Tibial artery (tissue), 4 donors: ENCODE measurements at regions of chr17 and their contacts with region 1.

Region 1: DNA sequence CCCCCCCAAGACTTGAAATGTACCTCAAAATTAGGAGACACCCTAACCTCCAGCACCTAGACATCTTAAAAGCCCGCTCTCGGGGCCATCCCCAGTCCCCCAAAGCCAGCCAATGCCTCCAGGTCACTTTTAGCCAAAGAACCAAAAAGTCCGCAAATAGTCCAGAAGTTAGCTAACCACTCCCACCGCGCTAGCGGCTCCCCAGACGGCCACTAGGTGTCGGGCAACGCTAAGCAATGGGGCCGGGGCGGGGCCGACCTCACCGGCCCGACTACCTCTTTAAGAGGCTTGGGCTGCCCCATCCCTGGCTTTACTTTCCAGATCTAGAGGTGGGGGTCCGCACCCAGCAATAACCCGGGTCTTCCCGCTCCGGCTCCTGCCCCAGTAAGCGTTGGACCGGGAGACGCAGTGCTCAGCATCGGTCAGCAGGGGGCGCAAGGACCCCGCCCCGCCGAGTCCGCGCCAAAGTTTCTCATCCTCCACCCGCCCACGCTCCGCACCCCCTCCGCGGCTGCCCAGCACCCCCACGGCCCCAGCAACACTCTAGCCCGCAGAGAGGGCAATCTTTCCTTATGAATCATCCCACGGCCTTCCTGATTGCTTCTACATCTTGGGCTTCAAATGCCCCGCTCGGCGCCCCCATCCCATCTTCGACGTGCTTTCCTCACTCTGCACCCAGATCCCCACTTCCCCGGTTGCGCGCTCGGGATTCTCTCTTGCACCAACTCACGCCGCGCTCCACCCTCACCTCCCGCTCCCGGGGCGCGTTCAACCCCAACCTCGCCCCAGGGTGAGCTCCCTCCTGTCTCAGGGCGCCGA is 765 bp downstream of the COL1A1 start:
- DNase-seq: peak; percentile 93 to 96
- H3K4me3 ChIP-seq: peak overlapping the region; percentile 67 to 89
- H3K27ac ChIP-seq: peak overlapping the region; percentile 98 to 99
- H3K4me1 ChIP-seq: peaks cover 0 to 81% (median 58%) of the 10 kb centered on the region in 4 donors
- H3K27me3 ChIP-seq: no peaks in the 10 kb centered on the region
- CTCF ChIP-seq: peak; percentile 100

Region 2: DNA sequence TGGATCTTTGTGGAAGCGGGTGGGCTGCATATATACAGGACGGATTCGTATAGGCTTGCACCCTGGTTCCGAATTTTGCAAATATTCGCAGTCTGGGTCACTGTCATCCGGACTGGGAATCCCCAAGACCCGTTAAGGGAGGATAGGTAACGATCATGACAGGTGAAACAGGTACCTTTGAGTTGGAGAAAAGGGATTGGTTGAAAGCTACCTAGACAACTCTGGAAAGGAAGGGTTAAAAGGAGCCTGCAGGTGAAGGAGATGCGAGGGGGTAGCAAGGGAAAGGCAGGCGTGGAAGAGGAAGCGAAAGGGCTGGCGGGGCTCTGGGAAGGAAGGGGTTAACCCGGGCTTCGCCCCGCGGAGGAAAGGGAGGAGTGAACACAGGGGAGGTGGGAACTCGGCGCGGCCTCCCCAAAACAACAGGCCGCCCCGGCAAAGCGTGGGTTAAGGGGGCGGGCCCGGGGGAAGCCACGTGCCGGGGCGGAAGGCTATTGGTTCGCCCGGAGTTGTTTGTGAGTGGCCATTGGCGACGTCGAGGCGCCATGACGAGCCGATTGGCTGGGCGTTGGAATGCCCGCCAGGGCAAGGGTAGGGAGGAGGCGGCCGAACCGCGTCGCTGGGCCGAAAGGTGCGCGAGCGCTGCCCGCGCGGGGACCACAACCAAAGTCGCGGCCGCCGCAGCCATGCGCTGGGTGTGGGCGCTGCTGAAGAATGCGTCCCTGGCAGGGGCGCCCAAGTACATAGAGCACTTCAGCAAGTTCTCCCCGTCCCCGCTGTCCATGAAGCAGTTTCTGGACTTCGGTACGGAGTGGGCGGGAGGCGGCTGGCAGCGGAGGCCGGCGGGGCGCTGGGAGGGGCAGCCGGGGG is 105.7 kb before region 1 on chr17 and contains the start of gene PDK2:
- intact Hi-C with region 1: loop called (anchors 5 kb)
- DNase-seq: peak; percentile 96 to 98
- H3K4me3 ChIP-seq: peak within 1 kb of the TSS; percentile 77 to 89
- H3K27ac ChIP-seq: peak within 1 kb of the TSS; percentile 87 to 96
- H3K4me1 ChIP-seq: peaks cover 0 to 38% (median 25%) of the 10 kb centered on the region in 4 donors
- H3K27me3 ChIP-seq: no peaks in the 10 kb centered on the region
- CTCF ChIP-seq: no peak

Region 3: GRCh38 chr17:50269477-50270434 is 69.1 kb after region 1 on chr17:
- intact Hi-C with region 1: loop called (anchors 1 kb)
- DNase-seq: peak; percentile 87 to 88
- H3K4me3 ChIP-seq: no peak overlapping the region
- H3K27ac ChIP-seq: peak overlapping the region; percentile 89 to 91
- H3K4me1 ChIP-seq: peaks cover 10 to 63% (median 56%) of the 10 kb centered on the region in 4 donors
- H3K27me3 ChIP-seq: peaks cover 0 to 9% of the 10 kb centered on the region in 2 donors
- CTCF ChIP-seq: peak; percentile 80 to 83

Region 4: DNA sequence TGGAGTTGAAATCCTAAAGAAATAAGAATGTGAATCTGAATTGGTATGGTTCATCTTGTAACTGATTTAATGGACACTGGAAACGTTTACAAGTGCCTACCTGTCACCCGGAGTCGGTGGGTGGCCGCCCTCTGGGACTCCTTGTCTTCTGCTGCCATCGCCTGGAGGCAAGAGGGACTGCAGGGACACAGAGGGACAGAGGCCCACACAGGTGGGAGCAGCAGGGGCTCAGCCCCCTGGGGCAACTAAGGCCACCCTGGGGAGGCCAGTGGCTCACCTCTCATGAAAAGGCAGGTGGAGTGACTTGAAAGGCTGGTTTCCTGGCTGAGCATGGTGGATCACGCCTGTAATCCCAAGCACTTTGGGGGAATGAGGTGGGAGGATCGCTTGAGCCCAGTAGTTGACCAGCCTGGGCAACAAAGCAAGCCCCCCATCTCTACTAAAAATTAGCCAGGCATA is 96.8 kb after region 1 on chr17:
- intact Hi-C with region 1: loop called (anchors 2 kb)
- DNase-seq: peak; percentile 77 to 85
- H3K4me3 ChIP-seq: no peak overlapping the region
- H3K27ac ChIP-seq: no peak overlapping the region
- H3K4me1 ChIP-seq: no peaks in the 10 kb centered on the region
- H3K27me3 ChIP-seq: no peaks in the 10 kb centered on the region
- CTCF ChIP-seq: peak; percentile 95 to 99